Calu3 (cell line): ENCODE measurements at regions of chr12 and their contacts with region 1.

Region 1: DNA sequence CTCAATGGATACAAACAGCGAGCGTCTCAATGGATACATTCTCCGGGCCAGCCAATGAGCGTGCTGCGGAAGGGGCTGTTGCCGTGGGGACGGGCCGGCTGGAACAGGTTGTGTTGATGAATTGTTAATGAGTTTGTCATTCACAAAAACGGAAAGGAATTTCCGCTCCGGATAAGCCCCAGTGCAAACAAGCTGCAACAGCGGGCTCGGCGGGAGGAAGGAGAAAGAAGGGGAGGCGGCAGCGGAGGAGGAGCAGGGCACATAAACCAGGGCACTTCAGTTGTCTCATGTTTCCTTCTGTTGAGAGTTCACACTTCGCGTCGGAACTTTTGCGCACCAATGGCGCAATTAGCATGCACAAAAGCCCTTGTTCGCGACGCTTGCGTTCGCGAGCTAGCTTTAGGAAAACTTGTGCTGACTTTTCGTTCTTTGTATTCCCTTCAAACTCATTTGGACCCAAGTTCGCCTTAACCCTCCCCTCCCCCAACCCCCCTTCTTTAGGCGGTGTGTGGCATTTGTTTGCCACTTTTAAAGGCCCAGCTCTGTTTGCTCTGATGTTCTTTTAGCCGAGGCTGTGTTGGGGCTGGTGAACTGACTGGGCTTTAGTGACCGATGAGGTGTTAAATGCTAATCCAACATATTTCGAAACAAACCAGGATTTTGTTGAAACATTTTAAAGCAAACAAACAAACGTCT is at the start of gene DUSP6:
- DNase-seq: peak; percentile 97
- H3K4me3 Mint-ChIP-seq: peak within 1 kb of the TSS; percentile 90
- H3K27ac Mint-ChIP-seq: peak within 1 kb of the TSS; percentile 97
- H3K4me1 Mint-ChIP-seq: peaks cover 42% of the 10 kb centered on the region
- H3K27me3 Mint-ChIP-seq: no peaks in the 10 kb centered on the region
- CTCF ChIP-seq: no peak
- total RNA-seq, gene DUSP6: 108 TPM in 2 replicates

Region 2: GRCh38 chr12:88960213-88960878 is 392.3 kb before region 1 on chr12:
- CTCF ChIA-PET with region 1: no interaction called
- intact Hi-C with region 1: no loop called
- DNase-seq: no peak
- H3K4me3 Mint-ChIP-seq: no peak overlapping the region
- H3K27ac Mint-ChIP-seq: no peak overlapping the region
- H3K4me1 Mint-ChIP-seq: peaks cover 38% of the 10 kb centered on the region
- H3K27me3 Mint-ChIP-seq: no peaks in the 10 kb centered on the region
- CTCF ChIP-seq: no peak

Region 3: GRCh38 chr12:89019408-89020120 is 333.1 kb before region 1 on chr12:
- CTCF ChIA-PET with region 1: interaction called, 8 read pairs
- intact Hi-C with region 1: loop called (anchors 2 kb)
- DNase-seq: peak; percentile 82
- H3K4me3 Mint-ChIP-seq: no peak overlapping the region
- H3K27ac Mint-ChIP-seq: no peak overlapping the region
- H3K4me1 Mint-ChIP-seq: peaks cover 21% of the 10 kb centered on the region
- H3K27me3 Mint-ChIP-seq: no peaks in the 10 kb centered on the region
- CTCF ChIP-seq: peak; percentile 91

Region 4: DNA sequence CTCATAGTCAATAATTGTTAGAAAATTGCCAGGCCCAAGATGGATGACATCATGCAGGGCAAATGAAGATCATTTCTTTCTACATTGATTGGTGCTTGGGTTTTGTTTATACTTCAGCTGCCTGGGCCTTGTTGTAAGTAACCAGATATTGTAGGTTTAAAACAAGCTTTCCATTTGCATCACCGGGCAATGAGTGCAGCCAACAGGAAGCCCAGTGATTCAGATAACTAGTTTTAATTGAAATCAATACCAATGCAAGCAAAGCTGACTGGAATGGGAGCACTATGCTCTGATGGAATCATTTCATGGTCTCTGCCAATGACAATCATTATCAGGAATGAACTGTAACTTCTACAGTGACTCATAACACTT is 279.6 kb before region 1 on chr12:
- CTCF ChIA-PET with region 1: interaction called, 3 read pairs
- intact Hi-C with region 1: loop called (anchors 2 kb)
- DNase-seq: peak; percentile 75
- H3K4me3 Mint-ChIP-seq: peak overlapping the region; percentile 23
- H3K27ac Mint-ChIP-seq: peak overlapping the region; percentile 77
- H3K4me1 Mint-ChIP-seq: peaks cover 45% of the 10 kb centered on the region
- H3K27me3 Mint-ChIP-seq: no peaks in the 10 kb centered on the region
- CTCF ChIP-seq: no peak

Region 5: GRCh38 chr12:89373763-89374572 is 21.3 kb after region 1 on chr12:
- CTCF ChIA-PET with region 1: interaction called, 17 read pairs
- intact Hi-C with region 1: loop called (anchors 1 kb)
- DNase-seq: peak; percentile 53
- H3K4me3 Mint-ChIP-seq: no peak overlapping the region
- H3K27ac Mint-ChIP-seq: peak overlapping the region; percentile 99
- H3K4me1 Mint-ChIP-seq: peaks cover 77% of the 10 kb centered on the region
- H3K27me3 Mint-ChIP-seq: no peaks in the 10 kb centered on the region
- CTCF ChIP-seq: no peak

Region 6: GRCh38 chr12:89481213-89481914 is 128.7 kb after region 1 on chr12:
- CTCF ChIA-PET with region 1: no interaction called
- intact Hi-C with region 1: no loop called
- DNase-seq: no peak
- H3K4me3 Mint-ChIP-seq: no peak overlapping the region
- H3K27ac Mint-ChIP-seq: no peak overlapping the region
- H3K4me1 Mint-ChIP-seq: peaks cover 22% of the 10 kb centered on the region
- H3K27me3 Mint-ChIP-seq: no peaks in the 10 kb centered on the region
- CTCF ChIP-seq: no peak

Region 7: DNA sequence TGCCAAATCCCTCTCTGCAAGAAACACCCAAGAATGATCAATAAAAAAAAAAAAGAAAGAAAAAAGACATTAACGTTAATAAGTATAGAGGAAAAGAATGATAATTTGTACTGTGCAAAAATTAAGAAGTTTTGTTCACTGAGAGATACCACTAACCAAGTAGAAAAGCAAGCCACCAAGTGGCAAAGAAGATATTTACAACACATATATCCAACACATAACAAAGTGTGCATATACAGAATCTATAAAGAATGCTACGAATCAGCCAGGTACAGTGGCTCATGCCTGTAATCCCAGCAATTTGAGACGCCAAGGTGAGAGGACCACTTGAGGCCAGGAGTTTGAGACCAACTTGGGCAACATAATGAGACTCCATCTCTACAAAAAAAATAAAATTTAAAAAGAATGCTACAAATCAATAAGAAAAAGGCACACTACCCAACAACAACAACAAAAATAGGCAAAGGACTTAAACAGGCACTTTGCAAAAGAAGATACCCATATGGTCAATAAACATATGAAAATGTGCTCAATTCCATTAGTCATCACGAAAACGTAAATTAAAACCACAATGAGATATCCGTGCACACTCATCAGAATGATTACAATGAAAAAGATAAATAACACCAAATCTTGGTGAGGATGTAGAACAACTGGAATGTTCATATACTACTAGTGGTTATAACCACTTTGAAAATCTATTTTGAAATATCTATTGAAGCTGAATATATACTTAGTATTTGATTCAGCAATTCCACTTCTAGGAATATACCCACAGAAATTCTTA is 152.1 kb after region 1 on chr12:
- CTCF ChIA-PET with region 1: no interaction called
- intact Hi-C with region 1: loop called (anchors 5 kb)
- DNase-seq: no peak
- H3K4me3 Mint-ChIP-seq: no peak overlapping the region
- H3K27ac Mint-ChIP-seq: peak overlapping the region; percentile 97
- H3K4me1 Mint-ChIP-seq: peaks cover 66% of the 10 kb centered on the region
- H3K27me3 Mint-ChIP-seq: no peaks in the 10 kb centered on the region
- CTCF ChIP-seq: no peak

Region 8: DNA sequence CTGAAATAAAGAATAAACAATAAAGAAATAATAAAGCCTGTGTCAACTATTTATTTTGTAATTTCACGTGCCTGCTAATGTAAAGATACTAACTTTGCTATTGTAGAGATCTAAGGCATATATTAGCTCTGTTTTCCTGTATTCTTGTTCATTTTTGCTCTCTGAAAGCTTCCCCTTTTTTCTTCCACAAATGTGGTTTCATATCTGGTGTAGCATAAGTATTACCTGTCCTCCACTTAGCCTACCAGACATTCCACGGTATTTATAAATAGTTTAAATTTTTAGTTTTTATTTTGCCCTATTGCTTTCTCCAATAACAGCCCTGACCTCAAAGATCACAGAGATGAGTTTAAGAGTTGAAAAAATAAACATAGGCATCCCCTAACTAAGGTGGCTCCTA is 448.6 kb after region 1 on chr12:
- CTCF ChIA-PET with region 1: no interaction called
- intact Hi-C with region 1: no loop called
- DNase-seq: no peak
- H3K4me3 Mint-ChIP-seq: no peak overlapping the region
- H3K27ac Mint-ChIP-seq: no peak overlapping the region
- H3K4me1 Mint-ChIP-seq: no peaks in the 10 kb centered on the region
- H3K27me3 Mint-ChIP-seq: no peaks in the 10 kb centered on the region
- CTCF ChIP-seq: no peak